Activated T-helper 2 cell treated with anti-CD3 and anti-CD28 coated beads, Interferon-gamma antibody, Interleukin-2, Interleukin-4, amounts not matched to agents 10 μg/mL and 5 μg/mL and 100 μg/mL, durations not matched to agents 14 hours and 24 hours and 36 hours (primary cell): ENCODE measurements at regions of chr5 and their contacts with region 1.

Region 1: DNA sequence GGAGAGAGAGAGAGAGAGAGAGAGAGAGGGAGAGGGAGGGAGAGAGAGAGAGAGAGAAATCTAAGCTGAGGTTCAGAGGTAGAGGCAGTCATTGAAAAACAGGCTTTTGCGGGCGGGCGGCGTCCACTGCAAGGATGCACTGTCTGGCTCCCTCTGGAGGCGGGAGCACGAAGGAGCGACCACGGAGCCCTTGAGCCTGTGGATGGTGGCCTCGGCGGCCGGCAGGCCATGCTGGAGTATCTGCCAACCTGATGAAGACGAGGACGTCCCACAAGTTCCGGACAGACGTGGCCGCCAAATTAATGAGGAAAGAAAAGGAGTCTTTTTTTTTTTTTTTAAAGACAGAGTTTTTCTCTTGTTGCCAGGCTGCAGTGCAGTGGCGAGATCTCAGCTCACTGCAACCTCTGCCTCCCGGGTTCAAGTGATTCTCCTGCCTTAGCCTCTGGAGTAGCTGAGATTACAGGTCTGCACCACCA is 2.2 kb upstream of the CCDC125 start:
- DNase-seq: peak; percentile 71
- H3K4me3 Mint-ChIP-seq: peak overlapping the region; percentile 33
- H3K27ac Mint-ChIP-seq: no peak overlapping the region
- H3K4me1 Mint-ChIP-seq: peaks cover 14% of the 10 kb centered on the region
- H3K27me3 Mint-ChIP-seq: no peaks in the 10 kb centered on the region

Region 2: GRCh38 chr5:69042915-69043658 is 291.7 kb before region 1 on chr5:
- intact Hi-C with region 1: loop called (anchors 1 kb)
- DNase-seq: peak; percentile 73
- H3K4me3 Mint-ChIP-seq: peak overlapping the region; percentile 82
- H3K27ac Mint-ChIP-seq: peak overlapping the region; percentile 72
- H3K4me1 Mint-ChIP-seq: peaks cover 19% of the 10 kb centered on the region
- H3K27me3 Mint-ChIP-seq: no peaks in the 10 kb centered on the region

Region 3: DNA sequence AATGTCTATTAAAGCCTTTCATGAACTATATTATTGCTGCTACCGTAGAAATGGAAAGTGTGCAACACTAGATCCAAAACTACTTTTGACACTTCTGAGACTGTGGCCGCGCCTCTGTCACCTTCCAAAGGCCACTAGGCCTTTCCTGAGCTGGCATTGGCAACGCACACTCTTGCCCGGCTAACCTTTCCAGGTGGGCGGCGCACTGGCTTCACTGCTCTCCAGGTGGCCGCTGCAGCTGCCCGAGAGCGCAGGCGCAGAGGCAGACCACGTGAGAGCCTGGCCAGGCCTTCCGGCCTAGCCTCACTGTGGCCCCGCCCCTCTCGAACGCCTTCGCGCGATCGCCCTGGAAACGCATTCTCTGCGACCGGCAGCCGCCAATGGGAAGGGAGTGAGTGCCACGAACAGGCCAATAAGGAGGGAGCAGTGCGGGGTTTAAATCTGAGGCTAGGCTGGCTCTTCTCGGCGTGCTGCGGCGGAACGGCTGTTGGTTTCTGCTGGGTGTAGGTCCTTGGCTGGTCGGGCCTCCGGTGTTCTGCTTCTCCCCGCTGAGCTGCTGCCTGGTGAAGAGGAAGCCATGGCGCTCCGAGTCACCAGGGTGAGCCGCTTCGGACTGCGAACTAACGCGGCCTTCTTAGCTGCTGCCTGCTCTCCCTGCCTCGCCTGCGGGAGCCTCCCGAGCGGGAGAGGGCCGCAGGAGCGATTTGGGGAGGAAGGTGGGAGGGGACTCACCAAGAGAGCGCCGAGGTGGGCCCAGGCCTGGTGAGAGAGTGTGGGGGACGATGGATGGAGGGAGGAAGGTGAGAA is 167.9 kb before region 1 on chr5 and contains the start of gene CCNB1:
- intact Hi-C with region 1: loop called (anchors 5 kb)
- DNase-seq: peak; percentile 99
- H3K4me3 Mint-ChIP-seq: peak within 1 kb of the TSS; percentile 94
- H3K27ac Mint-ChIP-seq: peak within 1 kb of the TSS; percentile 69
- H3K4me1 Mint-ChIP-seq: peaks cover 32% of the 10 kb centered on the region
- H3K27me3 Mint-ChIP-seq: no peaks in the 10 kb centered on the region
- total RNA-seq, gene CCNB1: 152 and 164 TPM in 2 replicates

Region 4: GRCh38 chr5:69189162-69190086 is 145.4 kb before region 1 on chr5 and contains the start of gene CENPH:
- intact Hi-C with region 1: loop called (anchors 1 kb)
- DNase-seq: peak; percentile 93
- H3K4me3 Mint-ChIP-seq: peak within 1 kb of the TSS; percentile 92
- H3K27ac Mint-ChIP-seq: peak within 1 kb of the TSS; percentile 97
- H3K4me1 Mint-ChIP-seq: peaks cover 13% of the 10 kb centered on the region
- H3K27me3 Mint-ChIP-seq: no peaks in the 10 kb centered on the region
- total RNA-seq, gene CENPH: 35.3 and 37.0 TPM in 2 replicates

Region 5: GRCh38 chr5:69217548-69218526 is 117.0 kb before region 1 on chr5:
- intact Hi-C with region 1: loop called (anchors 10 kb)
- DNase-seq: peak; percentile 88
- H3K4me3 Mint-ChIP-seq: peak overlapping the region; percentile 98
- H3K27ac Mint-ChIP-seq: peak overlapping the region; percentile 97
- H3K4me1 Mint-ChIP-seq: peaks cover 10% of the 10 kb centered on the region
- H3K27me3 Mint-ChIP-seq: no peaks in the 10 kb centered on the region

Region 6: GRCh38 chr5:69265931-69266330 is 68.9 kb before region 1 on chr5:
- intact Hi-C with region 1: loop called (anchors 10 kb)
- DNase-seq: no peak
- H3K4me3 Mint-ChIP-seq: no peak overlapping the region
- H3K27ac Mint-ChIP-seq: no peak overlapping the region
- H3K4me1 Mint-ChIP-seq: no peaks in the 10 kb centered on the region
- H3K27me3 Mint-ChIP-seq: no peaks in the 10 kb centered on the region

Region 7: DNA sequence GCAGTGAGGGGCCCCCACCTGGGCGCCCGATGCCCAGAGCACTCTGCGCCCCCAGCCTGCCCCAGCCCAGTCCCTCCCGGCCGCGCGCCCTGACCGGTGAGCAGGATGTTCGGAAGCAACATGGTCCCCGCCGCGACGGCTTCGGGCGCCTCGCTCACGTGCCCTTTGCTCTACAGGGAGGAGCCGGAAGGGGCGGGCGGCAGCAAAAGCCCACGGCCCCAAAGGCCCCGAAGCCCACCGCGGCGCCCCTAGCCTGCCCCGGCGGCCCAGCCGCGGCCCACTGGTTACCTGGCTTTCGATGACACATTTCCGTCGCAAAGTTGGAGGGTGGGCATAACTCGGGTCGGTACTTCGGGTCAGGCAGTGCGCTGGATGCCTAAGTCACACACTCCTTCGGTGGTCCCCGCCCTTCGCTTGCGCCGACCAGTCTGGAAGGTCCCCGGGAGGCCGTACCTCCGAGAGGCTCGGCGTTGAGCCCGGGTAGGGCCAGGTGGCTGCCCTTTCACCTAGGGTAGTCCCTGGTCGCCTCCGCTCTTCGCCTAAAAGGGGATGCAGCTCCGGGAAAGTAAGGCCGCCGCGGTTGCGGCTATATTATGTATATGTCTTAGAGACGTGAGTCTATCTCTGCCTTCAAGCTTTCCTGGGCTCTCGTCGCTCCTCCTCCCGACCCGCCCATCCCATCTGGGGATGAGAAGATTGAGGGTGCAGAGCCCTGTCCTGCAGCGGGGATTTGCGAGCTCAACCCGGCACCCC is 34.7 kb after region 1 on chr5 and contains the starts of genes AK6, RAD17 and TAF9:
- intact Hi-C with region 1: loop called (anchors 1 kb)
- DNase-seq: peak; percentile 90
- H3K4me3 Mint-ChIP-seq: peak within 1 kb of the TSS; percentile 96
- H3K27ac Mint-ChIP-seq: peak within 1 kb of the TSS; percentile 97
- H3K4me1 Mint-ChIP-seq: peaks cover 31% of the 10 kb centered on the region
- H3K27me3 Mint-ChIP-seq: no peaks in the 10 kb centered on the region
- total RNA-seq, gene AK6: 59.8 and 60.1 TPM in 2 replicates
- total RNA-seq, gene RAD17: 24.7 and 28.0 TPM in 2 replicates
- total RNA-seq, gene TAF9: 58.0 and 63.2 TPM in 2 replicates